ENCODE measurements at regions of chr9 and their contacts with region 1.

Region 1: GRCh38 chr9:34522971-34523797 is at the start of gene ENHO:
- DNase-seq: peak; percentile 75 to 96 (median 90)
- ATAC-seq: peak; percentile 98
- H3K4me3 ChIP-seq: peak within 1 kb of the TSS; percentile 55
- H3K4me3 Mint-ChIP-seq: peak within 1 kb of the TSS; percentile 69
- H3K27ac ChIP-seq: no peak within 1 kb of the TSS
- H3K27ac Mint-ChIP-seq: no peak within 1 kb of the TSS
- H3K4me1 ChIP-seq: peaks cover 16% of the 10 kb centered on the region
- H3K4me1 Mint-ChIP-seq: peaks cover 12% of the 10 kb centered on the region
- H3K27me3 ChIP-seq: no peaks in the 10 kb centered on the region
- H3K27me3 Mint-ChIP-seq: no peaks in the 10 kb centered on the region
- CTCF ChIP-seq: no peak
- total RNA-seq, gene ENHO: 0.45 TPM in 1 of 2 experiments, not detected in the other

Region 2: GRCh38 chr9:34126207-34127034 is 396.8 kb before region 1 on chr9 and contains the start of gene DCAF12:
- CTCF ChIA-PET with region 1: no interaction called
- POLR2A ChIA-PET with region 1: no interaction called
- intact Hi-C with region 1: loop called in 1 of 2 experiments (anchors 10 kb)
- DNase-seq: peak; percentile 81 to 97 (median 88)
- ATAC-seq: peak; percentile 94
- H3K4me3 ChIP-seq: peak within 1 kb of the TSS; percentile 86
- H3K4me3 Mint-ChIP-seq: peak within 1 kb of the TSS; percentile 100
- H3K27ac ChIP-seq: peak within 1 kb of the TSS; percentile 86 to 88
- H3K27ac Mint-ChIP-seq: peak within 1 kb of the TSS; percentile 99
- H3K4me1 ChIP-seq: peaks cover 45% of the 10 kb centered on the region
- H3K4me1 Mint-ChIP-seq: peaks cover 57% of the 10 kb centered on the region
- H3K27me3 ChIP-seq: no peaks in the 10 kb centered on the region
- H3K27me3 Mint-ChIP-seq: no peaks in the 10 kb centered on the region
- CTCF ChIP-seq: no peak
- total RNA-seq, gene DCAF12: 5.4 to 5.9 TPM

Region 3: GRCh38 chr9:34337404-34337803 is 185.8 kb before region 1 on chr9:
- CTCF ChIA-PET with region 1: no interaction called
- POLR2A ChIA-PET with region 1: no interaction called
- intact Hi-C with region 1: no loop called
- DNase-seq: no peak
- ATAC-seq: no peak
- H3K4me3 ChIP-seq: no peak overlapping the region
- H3K4me3 Mint-ChIP-seq: no peak overlapping the region
- H3K27ac ChIP-seq: no peak overlapping the region
- H3K27ac Mint-ChIP-seq: no peak overlapping the region
- H3K4me1 ChIP-seq: no peaks in the 10 kb centered on the region
- H3K4me1 Mint-ChIP-seq: peaks cover 11% of the 10 kb centered on the region
- H3K27me3 ChIP-seq: no peaks in the 10 kb centered on the region
- H3K27me3 Mint-ChIP-seq: no peaks in the 10 kb centered on the region
- CTCF ChIP-seq: no peak

Region 4: GRCh38 chr9:34611829-34612630 is 88.8 kb after region 1 on chr9 and contains the start of gene RPP25L:
- CTCF ChIA-PET with region 1: no interaction called
- POLR2A ChIA-PET with region 1: no interaction called
- intact Hi-C with region 1: loop called in 1 of 2 experiments (anchors 5 kb)
- DNase-seq: peak; percentile 64 to 94 (median 82)
- ATAC-seq: peak; percentile 91
- H3K4me3 ChIP-seq: peak within 1 kb of the TSS; percentile 95
- H3K4me3 Mint-ChIP-seq: peak within 1 kb of the TSS; percentile 84
- H3K27ac ChIP-seq: peak within 1 kb of the TSS; percentile 79 to 83
- H3K27ac Mint-ChIP-seq: peak within 1 kb of the TSS; percentile 40
- H3K4me1 ChIP-seq: peaks cover 28% of the 10 kb centered on the region
- H3K4me1 Mint-ChIP-seq: peaks cover 24% of the 10 kb centered on the region
- H3K27me3 ChIP-seq: no peaks in the 10 kb centered on the region
- H3K27me3 Mint-ChIP-seq: no peaks in the 10 kb centered on the region
- CTCF ChIP-seq: no peak
- total RNA-seq, gene RPP25L: 4.6 to 5.7 TPM

Region 5: DNA sequence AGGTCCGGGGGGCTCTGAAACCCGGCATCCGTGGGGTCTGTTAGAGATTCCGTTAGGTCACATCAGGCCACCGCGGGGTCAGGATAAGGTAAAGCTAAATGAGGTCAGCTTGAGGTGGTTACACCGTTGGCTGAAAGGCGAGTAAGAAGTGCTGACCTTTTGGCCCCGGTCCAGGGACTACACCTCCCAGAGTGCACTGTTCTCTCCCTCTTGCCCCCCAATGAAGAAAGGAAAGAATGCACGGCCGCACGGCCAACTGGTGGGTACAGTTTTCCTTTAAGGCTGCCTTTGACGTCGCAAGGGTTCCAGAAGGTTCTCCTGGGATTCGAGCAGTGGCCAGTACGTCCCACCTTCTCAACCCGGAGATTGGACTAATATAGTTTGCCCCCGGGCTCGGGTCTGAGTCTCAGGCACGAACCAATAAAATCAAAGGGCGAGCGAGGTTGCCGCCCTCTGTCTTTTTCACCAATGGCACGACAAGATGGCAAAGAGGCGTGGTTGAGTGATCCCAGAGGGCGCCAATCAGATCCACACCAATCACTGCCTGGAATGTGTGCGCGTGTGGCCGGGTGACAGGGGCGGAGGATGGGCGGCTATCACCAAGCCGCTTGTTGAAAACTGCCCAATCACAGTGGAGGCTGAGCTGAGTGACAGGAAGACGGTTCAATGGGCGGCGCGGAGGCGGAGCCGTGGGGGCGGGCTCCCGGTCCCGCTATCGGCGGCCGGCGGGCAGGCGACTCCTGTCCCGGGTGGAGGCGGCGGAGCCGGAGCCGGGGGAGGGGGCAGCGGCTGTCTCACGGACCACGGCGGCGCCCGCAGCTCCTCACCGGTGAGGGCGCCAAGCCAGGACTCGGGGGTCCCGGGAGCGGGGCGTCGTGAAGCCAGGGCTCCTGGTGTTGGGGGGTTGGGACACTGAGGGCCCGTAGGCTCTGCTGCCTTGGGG is 466.1 kb after region 1 on chr9 and contains the start of gene DNAJB5:
- CTCF ChIA-PET with region 1: no interaction called
- POLR2A ChIA-PET with region 1: no interaction called
- intact Hi-C with region 1: loop called in 1 of 2 experiments (anchors 5 kb)
- DNase-seq: peak; percentile 93 to 99 (median 95)
- ATAC-seq: peak; percentile 90
- H3K4me3 ChIP-seq: peak within 1 kb of the TSS; percentile 78
- H3K4me3 Mint-ChIP-seq: peak within 1 kb of the TSS; percentile 94
- H3K27ac ChIP-seq: peak within 1 kb of the TSS; percentile 62 to 63
- H3K27ac Mint-ChIP-seq: peak within 1 kb of the TSS; percentile 84
- H3K4me1 ChIP-seq: peaks cover 51% of the 10 kb centered on the region
- H3K4me1 Mint-ChIP-seq: peaks cover 51% of the 10 kb centered on the region
- H3K27me3 ChIP-seq: no peaks in the 10 kb centered on the region
- H3K27me3 Mint-ChIP-seq: no peaks in the 10 kb centered on the region
- CTCF ChIP-seq: no peak
- total RNA-seq, gene DNAJB5: 2.7 to 2.8 TPM

Region 6: GRCh38 chr9:35748858-35749514 is 1225.8 kb after region 1 on chr9 and contains the starts of genes GBA2 and RGP1:
- CTCF ChIA-PET with region 1: no interaction called
- POLR2A ChIA-PET with region 1: no interaction called
- intact Hi-C with region 1: loop called in 1 of 2 experiments (anchors 10 kb)
- DNase-seq: peak; percentile 25 to 77 (median 58)
- ATAC-seq: peak; percentile 59
- H3K4me3 ChIP-seq: peak within 1 kb of the TSS; percentile 98
- H3K4me3 Mint-ChIP-seq: peak within 1 kb of the TSS; percentile 99
- H3K27ac ChIP-seq: peak within 1 kb of the TSS; percentile 65 to 85
- H3K27ac Mint-ChIP-seq: peak within 1 kb of the TSS; percentile 88
- H3K4me1 ChIP-seq: peaks cover 48% of the 10 kb centered on the region
- H3K4me1 Mint-ChIP-seq: peaks cover 51% of the 10 kb centered on the region
- H3K27me3 ChIP-seq: no peaks in the 10 kb centered on the region
- H3K27me3 Mint-ChIP-seq: no peaks in the 10 kb centered on the region
- CTCF ChIP-seq: no peak
- total RNA-seq, gene GBA2: 17.3 to 18.6 TPM
- total RNA-seq, gene RGP1: 12.6 to 13.1 TPM